Cardiac septum (tissue), 1 donor: ENCODE measurements at regions of chr10 and their contacts with region 1.

Region 1: GRCh38 chr10:43396928-43397624 is 11.9 kb downstream of the HNRNPF start:
- DNase-seq: peak; percentile 97

Region 2: DNA sequence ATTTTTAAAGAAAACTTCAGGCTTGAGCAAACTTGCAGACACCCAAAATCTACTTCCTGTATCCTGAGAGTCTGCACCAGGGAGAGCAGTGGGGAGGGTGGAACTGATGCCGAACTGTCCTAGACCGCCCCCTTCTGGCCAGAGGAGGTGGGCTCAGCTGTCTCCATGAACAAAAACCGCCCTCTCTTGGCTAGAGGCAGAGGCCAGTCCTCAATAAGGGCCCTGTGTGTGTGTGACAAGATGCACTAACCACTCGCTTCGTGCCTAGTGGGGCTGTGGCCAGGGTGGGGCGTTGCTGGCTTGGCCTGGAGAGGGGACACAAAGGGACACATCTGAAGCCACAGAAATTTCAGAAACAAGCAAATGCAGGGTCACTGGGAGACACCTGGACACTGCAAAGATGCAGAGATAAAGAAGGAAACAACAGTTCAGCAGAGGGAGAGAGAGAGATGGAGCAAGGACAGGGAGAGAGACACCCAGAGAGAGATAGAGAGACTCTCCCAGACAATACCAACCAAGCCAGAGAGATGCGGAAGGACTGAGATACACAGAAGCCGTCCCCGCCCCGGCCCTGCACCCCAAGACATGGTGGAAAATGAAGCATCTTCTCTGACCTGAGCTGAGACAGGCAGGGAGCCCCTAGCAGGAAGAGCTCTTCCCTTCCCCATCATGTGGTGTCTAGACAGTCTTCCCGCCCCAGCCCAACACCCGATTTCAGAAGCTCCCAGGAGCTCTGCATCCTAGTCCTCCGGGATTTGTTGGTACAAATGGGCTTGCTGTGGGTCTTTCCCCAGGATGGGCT is 48.4 kb before region 1 on chr10:
- intact Hi-C with region 1: no loop called
- DNase-seq: peak; percentile 93

Region 3: GRCh38 chr10:43361986-43362839 is 34.9 kb before region 1 on chr10:
- intact Hi-C with region 1: loop called (anchors 5 kb)
- DNase-seq: peak; percentile 96

Region 4: DNA sequence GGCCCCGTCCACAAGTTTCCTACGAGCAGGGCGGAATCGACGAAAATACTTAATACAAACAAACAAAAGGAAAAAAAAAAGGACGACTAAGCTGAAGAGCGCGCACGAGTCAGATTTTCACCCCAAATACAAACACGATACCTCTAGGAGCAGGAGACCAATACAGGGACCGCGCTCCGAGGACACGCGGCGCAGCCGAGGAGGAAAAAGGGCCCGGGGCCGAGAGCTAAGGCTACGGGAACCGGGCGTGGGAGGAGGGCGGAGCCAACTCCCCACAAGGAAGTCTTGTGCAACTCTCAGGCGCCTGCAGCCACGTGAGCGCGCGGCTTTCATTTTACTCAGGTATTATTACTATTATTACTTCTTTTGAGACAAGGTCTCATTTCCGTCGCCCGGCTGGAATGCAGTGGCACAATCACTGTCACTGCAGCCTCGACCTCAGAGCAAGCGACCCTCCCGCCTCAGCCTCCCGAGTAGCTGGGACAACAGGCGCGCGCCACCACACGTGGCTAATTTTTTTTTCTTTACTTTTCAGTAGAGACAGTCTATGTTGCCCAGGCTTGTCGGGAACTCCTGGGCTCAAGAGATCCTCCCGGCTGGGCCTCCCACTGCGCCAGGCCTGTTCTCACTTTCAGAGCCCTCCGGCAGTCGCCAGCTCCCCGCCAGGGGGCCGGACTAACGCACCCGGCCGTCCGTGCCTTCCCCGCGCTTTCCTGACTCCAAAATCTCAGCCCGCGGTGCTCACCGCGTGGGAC is 10.7 kb after region 1 on chr10:
- intact Hi-C with region 1: loop called (anchors 1 kb)
- DNase-seq: peak; percentile 97

Region 5: DNA sequence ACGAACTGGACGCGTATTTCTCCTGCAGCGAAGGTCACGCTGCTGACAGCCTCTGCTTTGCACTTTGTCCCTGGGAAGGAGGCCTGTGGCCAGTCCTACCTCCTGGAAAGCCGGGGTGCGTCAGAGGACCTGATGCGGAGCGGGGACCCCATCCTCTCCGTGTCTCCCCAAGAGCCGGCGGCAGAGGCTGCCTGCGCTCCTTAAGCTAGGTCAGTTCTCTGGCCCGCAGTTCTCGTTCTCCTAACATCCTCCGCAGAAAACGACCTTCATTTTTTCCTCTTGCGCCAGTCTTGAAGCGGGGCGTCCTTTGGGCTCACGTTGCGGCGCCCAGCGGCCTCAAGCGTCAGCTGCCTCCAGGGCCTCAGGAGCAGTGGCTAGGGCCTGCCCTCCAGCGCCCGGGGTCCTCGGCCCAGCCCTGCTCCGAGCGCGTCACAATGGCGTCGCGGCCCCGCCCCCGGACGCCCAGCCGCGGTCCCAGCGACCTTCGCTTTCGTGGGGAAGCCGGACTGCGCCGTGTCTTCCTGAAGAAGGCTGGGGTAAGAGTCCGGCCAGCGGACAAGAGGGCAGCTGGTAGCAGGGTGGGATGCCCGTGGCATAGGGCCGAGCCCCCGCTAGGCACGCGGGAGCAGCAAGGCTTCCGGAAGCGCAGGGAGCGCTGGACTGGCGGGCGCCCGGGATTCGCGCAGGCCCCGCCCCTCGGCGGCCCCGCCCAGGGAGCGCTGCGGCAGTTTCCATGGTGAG is 39.5 kb after region 1 on chr10 and contains the start of gene ZNF487:
- intact Hi-C with region 1: loop called (anchors 5 kb)
- DNase-seq: peak; percentile 96
- total RNA-seq, gene ZNF487: 2.7 TPM